ENCODE measurements at regions of chr1 and their contacts with region 1.

Region 1: GRCh38 chr1:87328272-87329050 is at the start of gene LMO4:
- H3K4me3 Mint-ChIP-seq: peak within 1 kb of the TSS; percentile 96
- H3K27ac Mint-ChIP-seq: peak within 1 kb of the TSS; percentile 98
- H3K4me1 Mint-ChIP-seq: peaks cover 28% of the 10 kb centered on the region
- H3K27me3 Mint-ChIP-seq: peaks cover 3% of the 10 kb centered on the region

Region 2: GRCh38 chr1:86774305-86775295 is 553.9 kb before region 1 on chr1:
- intact Hi-C with region 1: loop called (anchors 10 kb)
- H3K4me3 Mint-ChIP-seq: peak overlapping the region; percentile 56
- H3K27ac Mint-ChIP-seq: peak overlapping the region; percentile 93
- H3K4me1 Mint-ChIP-seq: peaks cover 48% of the 10 kb centered on the region
- H3K27me3 Mint-ChIP-seq: no peaks in the 10 kb centered on the region

Region 3: DNA sequence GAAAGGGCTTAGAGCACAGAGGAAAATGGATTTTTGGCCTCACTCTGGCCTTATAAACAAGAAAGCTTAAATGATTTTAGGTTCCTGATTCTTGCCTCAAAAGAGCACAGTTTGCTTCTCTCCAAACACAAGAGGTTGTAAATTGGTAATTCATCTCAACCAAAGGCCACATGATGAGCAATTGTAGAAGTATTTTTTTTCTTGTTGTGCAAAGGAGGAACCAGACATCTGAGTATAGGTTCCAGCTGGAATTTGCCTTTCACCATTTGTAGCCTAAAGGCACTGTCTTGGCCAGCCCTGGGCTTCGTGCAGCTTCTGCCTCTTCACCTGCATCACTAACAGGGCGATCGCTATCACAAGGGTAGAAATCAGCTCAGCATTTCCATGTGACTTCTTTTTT is 178.8 kb before region 1 on chr1:
- intact Hi-C with region 1: loop called (anchors 5 kb)
- H3K4me3 Mint-ChIP-seq: no peak overlapping the region
- H3K27ac Mint-ChIP-seq: peak overlapping the region; percentile 47
- H3K4me1 Mint-ChIP-seq: peaks cover 70% of the 10 kb centered on the region
- H3K27me3 Mint-ChIP-seq: peaks cover 7% of the 10 kb centered on the region

Region 4: DNA sequence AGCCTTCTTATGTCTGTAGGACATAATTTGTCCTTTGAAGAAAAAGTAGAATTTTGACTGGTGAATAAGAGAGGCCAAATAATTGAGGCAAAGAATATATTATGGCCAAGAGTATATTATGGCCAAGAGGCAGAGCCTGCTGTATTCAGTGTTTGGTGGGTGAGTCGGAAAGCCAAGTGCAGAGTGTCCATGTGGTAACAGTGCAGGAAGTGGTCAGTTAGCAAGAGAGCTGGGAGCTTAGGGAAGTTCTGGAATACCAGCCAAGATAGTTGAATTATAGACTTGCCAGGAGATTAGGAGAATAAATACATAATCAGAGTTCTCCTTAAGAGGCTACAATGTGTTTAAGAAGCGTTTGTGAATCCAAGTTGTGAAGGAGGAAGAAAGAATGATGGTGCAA is 131.3 kb before region 1 on chr1:
- intact Hi-C with region 1: no loop called
- H3K4me3 Mint-ChIP-seq: no peak overlapping the region
- H3K27ac Mint-ChIP-seq: no peak overlapping the region
- H3K4me1 Mint-ChIP-seq: peaks cover 6% of the 10 kb centered on the region
- H3K27me3 Mint-ChIP-seq: peaks cover 5% of the 10 kb centered on the region

Region 5: DNA sequence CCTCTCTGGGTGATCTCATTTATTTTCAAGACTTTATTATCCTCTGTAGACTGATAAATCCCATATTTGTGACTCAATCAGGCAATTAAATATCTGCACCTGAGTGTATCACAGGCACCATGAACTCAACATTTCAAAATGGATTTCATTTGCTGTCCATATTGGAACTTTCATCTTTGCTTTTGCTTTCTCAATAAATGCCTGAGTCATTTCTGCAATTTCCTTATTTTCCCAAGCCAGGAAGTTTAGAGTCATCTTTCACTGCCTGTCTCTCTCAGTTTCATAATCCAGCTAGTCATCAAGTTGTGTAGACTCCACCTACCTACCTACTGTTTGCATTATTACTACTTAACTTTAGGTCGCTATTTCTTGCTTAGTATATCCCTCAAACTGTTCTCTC is 541.1 kb after region 1 on chr1:
- intact Hi-C with region 1: loop called (anchors 10 kb)
- H3K4me3 Mint-ChIP-seq: no peak overlapping the region
- H3K27ac Mint-ChIP-seq: peak overlapping the region; percentile 80
- H3K4me1 Mint-ChIP-seq: peaks cover 33% of the 10 kb centered on the region
- H3K27me3 Mint-ChIP-seq: no peaks in the 10 kb centered on the region

Region 6: GRCh38 chr1:87942165-87942564 is 613.7 kb after region 1 on chr1:
- intact Hi-C with region 1: no loop called
- H3K4me3 Mint-ChIP-seq: no peak overlapping the region
- H3K27ac Mint-ChIP-seq: no peak overlapping the region
- H3K4me1 Mint-ChIP-seq: no peaks in the 10 kb centered on the region
- H3K27me3 Mint-ChIP-seq: peaks cover 3% of the 10 kb centered on the region

Region 7: GRCh38 chr1:87953732-87954344 is 625.4 kb after region 1 on chr1:
- intact Hi-C with region 1: loop called (anchors 2 kb)
- H3K4me3 Mint-ChIP-seq: no peak overlapping the region
- H3K27ac Mint-ChIP-seq: no peak overlapping the region
- H3K4me1 Mint-ChIP-seq: peaks cover 13% of the 10 kb centered on the region
- H3K27me3 Mint-ChIP-seq: peaks cover 1% of the 10 kb centered on the region